HCT116 (cell line): ENCODE measurements at regions of chr4 and their contacts with region 1.

Region 1: DNA sequence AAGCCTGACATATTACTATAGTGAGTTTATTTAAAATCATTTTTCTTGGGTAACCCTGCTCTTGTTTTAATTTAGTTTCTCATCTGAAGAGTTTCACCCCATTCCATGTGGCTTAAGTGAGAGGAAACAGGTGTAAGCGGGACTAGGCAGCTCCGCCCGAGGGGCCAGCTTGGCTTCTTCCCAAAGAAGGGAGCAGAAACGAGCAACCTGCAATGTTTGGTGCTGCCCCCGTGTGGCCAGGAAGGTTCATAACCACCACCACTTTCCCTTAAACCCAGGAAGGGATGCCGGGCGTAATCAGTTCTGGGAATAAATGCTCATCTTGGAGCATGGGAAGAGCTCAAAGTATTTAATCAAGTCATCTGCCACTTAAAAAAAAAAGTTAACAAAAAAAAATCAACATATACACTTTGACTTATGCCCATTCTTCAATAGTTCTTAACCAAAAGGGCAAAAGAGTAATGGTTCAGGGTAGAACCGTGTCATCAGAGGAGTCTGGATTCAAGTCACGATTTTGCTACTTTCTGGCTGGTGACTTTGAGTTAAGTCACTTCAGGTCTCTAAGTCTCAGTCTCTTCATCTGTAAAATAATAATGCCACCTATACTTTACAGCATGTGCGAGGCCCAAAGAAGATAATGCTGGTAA is 147.9 kb downstream of the NSUN7 start:
- DNase-seq: peak; percentile 40
- ATAC-seq: peak; percentile 85
- H3K4me3 ChIP-seq: no peak overlapping the region
- H3K27ac ChIP-seq: no peak overlapping the region
- H3K4me1 ChIP-seq: peaks cover 0 to 16% of the 10 kb centered on the region in 2 experiments; a peak in 2 of 4 replicates
- H3K27me3 ChIP-seq: no peaks in the 10 kb centered on the region
- CTCF ChIP-seq: peak; percentile 50 to 80 (median 79); a peak in 5 of 6 replicates
- POLR2A ChIP-seq: no peak
- RAD21 ChIP-seq: peak; percentile 44

Region 2: GRCh38 chr4:40736910-40737309 is 160.8 kb before region 1 on chr4:
- CTCF ChIA-PET with region 1: interaction called, 3 read pairs
- POLR2A ChIA-PET with region 1: no interaction called
- RAD21 ChIA-PET with region 1: no interaction called
- intact Hi-C with region 1: loop called (anchors 1 kb)
- DNase-seq: peak; percentile 31
- ATAC-seq: peak; percentile 49
- H3K4me3 ChIP-seq: no peak overlapping the region
- H3K27ac ChIP-seq: no peak overlapping the region
- H3K4me1 ChIP-seq: no peaks in the 10 kb centered on the region
- H3K27me3 ChIP-seq: no peaks in the 10 kb centered on the region
- CTCF ChIP-seq: peak; percentile 22 to 70 (median 45); a peak in 4 of 6 replicates
- POLR2A ChIP-seq: no peak
- RAD21 ChIP-seq: peak; percentile 83

Region 3: GRCh38 chr4:40840985-40841571 is 56.6 kb before region 1 on chr4:
- CTCF ChIA-PET with region 1: interaction called, 5 read pairs
- POLR2A ChIA-PET with region 1: no interaction called
- RAD21 ChIA-PET with region 1: no interaction called
- intact Hi-C with region 1: loop called (anchors 1 kb)
- DNase-seq: peak; percentile 71
- ATAC-seq: peak; percentile 98
- H3K4me3 ChIP-seq: no peak overlapping the region
- H3K27ac ChIP-seq: no peak overlapping the region
- H3K4me1 ChIP-seq: peaks cover 4 to 11% of the 10 kb centered on the region in 2 experiments; a peak in 3 of 4 replicates
- H3K27me3 ChIP-seq: no peaks in the 10 kb centered on the region
- CTCF ChIP-seq: peak; percentile 78 to 95 (median 94)
- POLR2A ChIP-seq: no peak
- RAD21 ChIP-seq: peak; percentile 59

Region 4: GRCh38 chr4:40887288-40888131 is 10.2 kb before region 1 on chr4:
- CTCF ChIA-PET with region 1: interaction called, 10 read pairs
- POLR2A ChIA-PET with region 1: no interaction called
- RAD21 ChIA-PET with region 1: no interaction called
- intact Hi-C with region 1: no loop called
- DNase-seq: no peak
- ATAC-seq: no peak
- H3K4me3 ChIP-seq: no peak overlapping the region
- H3K27ac ChIP-seq: no peak overlapping the region
- H3K4me1 ChIP-seq: no peaks in the 10 kb centered on the region
- H3K27me3 ChIP-seq: no peaks in the 10 kb centered on the region
- CTCF ChIP-seq: no peak
- POLR2A ChIP-seq: no peak
- RAD21 ChIP-seq: no peak

Region 5: DNA sequence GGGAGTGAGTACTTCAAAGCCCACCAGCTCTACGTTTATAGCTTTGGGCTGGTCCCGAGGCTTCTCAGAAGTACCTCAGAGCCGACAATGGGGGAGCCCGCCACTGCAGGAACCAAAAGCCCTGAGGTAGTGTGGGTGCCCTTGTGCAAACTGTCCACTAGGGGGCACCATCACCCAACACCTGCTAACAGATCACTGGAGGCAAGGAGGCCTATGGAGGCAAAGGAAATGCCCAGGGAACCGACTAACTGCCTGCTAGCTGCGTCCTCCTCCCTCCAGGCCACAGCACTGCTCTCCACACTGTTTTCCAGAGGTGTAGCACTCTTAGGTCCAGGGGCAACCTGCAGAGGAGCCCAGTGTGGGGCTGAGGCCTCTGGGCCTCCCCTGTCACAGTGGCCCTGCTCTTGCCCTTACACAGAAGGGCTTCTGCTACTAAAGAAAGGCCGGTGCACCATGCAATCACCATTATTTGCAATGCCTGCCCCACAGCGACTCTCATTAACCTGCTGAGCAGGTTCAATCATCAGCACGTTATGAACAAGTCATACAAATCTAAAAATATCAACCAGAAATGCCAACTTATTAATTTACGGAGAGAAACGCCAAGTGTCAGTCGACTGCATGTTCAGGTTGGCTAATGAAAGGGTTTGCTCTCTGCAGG is 11.2 kb after region 1 on chr4:
- CTCF ChIA-PET with region 1: interaction called, 14 read pairs
- POLR2A ChIA-PET with region 1: no interaction called
- RAD21 ChIA-PET with region 1: no interaction called
- intact Hi-C with region 1: no loop called
- DNase-seq: peak; percentile 86
- ATAC-seq: peak; percentile 89
- H3K4me3 ChIP-seq: peak overlapping the region; percentile 15 to 49
- H3K27ac ChIP-seq: peak overlapping the region; percentile 78
- H3K4me1 ChIP-seq: peaks cover 33 to 40% of the 10 kb centered on the region in 2 experiments
- H3K27me3 ChIP-seq: no peaks in the 10 kb centered on the region
- CTCF ChIP-seq: peak in 2 of 3 experiments; percentile 98; a peak in 4 of 6 replicates
- POLR2A ChIP-seq: no peak
- RAD21 ChIP-seq: no peak

Region 6: DNA sequence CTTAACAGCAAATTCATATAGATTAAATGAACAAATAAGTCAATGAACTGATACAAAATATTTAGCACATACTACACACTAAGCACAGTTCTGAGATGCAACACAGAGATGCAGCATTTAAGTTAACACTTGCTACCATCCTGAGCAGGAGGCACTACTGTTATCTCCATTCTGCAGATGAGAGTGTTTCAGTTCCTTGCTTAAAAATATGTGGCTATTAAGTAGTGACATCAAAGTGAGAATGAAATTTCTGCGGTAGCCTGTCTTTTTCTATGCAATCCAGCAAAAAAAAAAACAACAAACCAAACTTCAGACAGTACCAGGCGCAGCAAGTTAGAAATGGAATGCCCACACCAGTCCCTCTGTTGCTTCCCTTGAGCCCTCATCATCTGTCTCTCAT is 1590.4 kb after region 1 on chr4:
- CTCF ChIA-PET with region 1: no interaction called
- POLR2A ChIA-PET with region 1: no interaction called
- RAD21 ChIA-PET with region 1: no interaction called
- intact Hi-C with region 1: no loop called
- DNase-seq: no peak
- ATAC-seq: no peak
- H3K4me3 ChIP-seq: no peak overlapping the region
- H3K27ac ChIP-seq: no peak overlapping the region
- H3K4me1 ChIP-seq: no peaks in the 10 kb centered on the region
- H3K27me3 ChIP-seq: peaks cover 39% of the 10 kb centered on the region
- CTCF ChIP-seq: no peak
- POLR2A ChIP-seq: no peak
- RAD21 ChIP-seq: no peak